IMR-90 (cell line): ENCODE measurements at regions of chr5 and their contacts with region 1.

Region 1: GRCh38 chr5:113612060-113612496 is 98.6 kb downstream of the YTHDC2 start:
- DNase-seq: peak; percentile 51
- ATAC-seq: peak; percentile 61
- H3K4me3 ChIP-seq: no peak overlapping the region
- H3K27ac ChIP-seq: no peak overlapping the region
- H3K4me1 ChIP-seq: peaks cover 9% of the 10 kb centered on the region
- H3K27me3 ChIP-seq: no peaks in the 10 kb centered on the region
- CTCF ChIP-seq: peak; percentile 67
- POLR2A ChIP-seq: no peak
- RAD21 ChIP-seq: peak; percentile 69

Region 2: GRCh38 chr5:113678924-113679575 is 67.0 kb after region 1 on chr5:
- CTCF ChIA-PET with region 1: interaction called, 3 read pairs
- POLR2A ChIA-PET with region 1: no interaction called
- dilution Hi-C with region 1: no loop called
- in situ Hi-C with region 1: no loop called
- intact Hi-C with region 1: loop called (anchors 1 kb)
- DNase-seq: peak; percentile 36
- ATAC-seq: peak; percentile 84
- H3K4me3 ChIP-seq: no peak overlapping the region
- H3K27ac ChIP-seq: no peak overlapping the region
- H3K4me1 ChIP-seq: no peaks in the 10 kb centered on the region
- H3K27me3 ChIP-seq: no peaks in the 10 kb centered on the region; the same call in 1 of the 2 replicates
- CTCF ChIP-seq: peak; percentile 84
- POLR2A ChIP-seq: no peak
- RAD21 ChIP-seq: peak; percentile 85

Region 3: DNA sequence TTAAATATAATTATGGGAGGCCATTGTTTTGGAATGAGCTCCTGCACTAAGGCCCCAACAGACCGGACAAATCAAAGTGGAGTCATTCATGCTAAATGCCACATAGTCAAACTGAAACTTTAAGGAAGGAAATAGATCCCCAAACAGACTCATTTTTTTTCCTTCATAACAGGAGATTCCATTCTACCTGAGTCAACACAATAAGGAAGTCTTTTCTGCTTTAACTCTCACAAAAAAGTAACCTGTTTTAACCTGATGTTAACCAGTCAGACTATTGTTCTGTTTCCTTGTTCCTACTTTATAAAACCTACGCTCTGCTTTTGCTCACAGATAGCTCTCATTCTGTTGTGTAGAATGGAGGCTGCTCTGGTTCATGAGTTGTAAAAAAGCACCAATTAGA is 136.3 kb after region 1 on chr5:
- CTCF ChIA-PET with region 1: no interaction called
- POLR2A ChIA-PET with region 1: no interaction called
- dilution Hi-C with region 1: no loop called
- in situ Hi-C with region 1: no loop called
- intact Hi-C with region 1: no loop called
- DNase-seq: no peak
- ATAC-seq: no peak
- H3K4me3 ChIP-seq: no peak overlapping the region
- H3K27ac ChIP-seq: no peak overlapping the region
- H3K4me1 ChIP-seq: no peaks in the 10 kb centered on the region
- H3K27me3 ChIP-seq: no peaks in the 10 kb centered on the region
- CTCF ChIP-seq: no peak
- POLR2A ChIP-seq: no peak
- RAD21 ChIP-seq: no peak

Region 4: GRCh38 chr5:114089259-114089658 is 477.2 kb after region 1 on chr5:
- CTCF ChIA-PET with region 1: no interaction called
- POLR2A ChIA-PET with region 1: no interaction called
- dilution Hi-C with region 1: no loop called
- in situ Hi-C with region 1: no loop called
- intact Hi-C with region 1: loop called (anchors 10 kb)
- DNase-seq: no peak
- ATAC-seq: no peak
- H3K4me3 ChIP-seq: no peak overlapping the region
- H3K27ac ChIP-seq: no peak overlapping the region
- H3K4me1 ChIP-seq: no peaks in the 10 kb centered on the region
- H3K27me3 ChIP-seq: no peaks in the 10 kb centered on the region
- CTCF ChIP-seq: no peak
- POLR2A ChIP-seq: no peak
- RAD21 ChIP-seq: no peak

Region 5: GRCh38 chr5:115262321-115263077 is 1650.4 kb after region 1 on chr5 and contains the start of gene PGGT1B:
- CTCF ChIA-PET with region 1: no interaction called
- POLR2A ChIA-PET with region 1: no interaction called
- dilution Hi-C with region 1: no loop called
- in situ Hi-C with region 1: no loop called
- intact Hi-C with region 1: loop called (anchors 10 kb)
- DNase-seq: peak; percentile 55
- ATAC-seq: peak; percentile 93
- H3K4me3 ChIP-seq: peak within 1 kb of the TSS; percentile 79
- H3K27ac ChIP-seq: peak within 1 kb of the TSS; percentile 91
- H3K4me1 ChIP-seq: peaks cover 7% of the 10 kb centered on the region; the same call in 1 of the 2 replicates
- H3K27me3 ChIP-seq: no peaks in the 10 kb centered on the region
- CTCF ChIP-seq: no peak
- POLR2A ChIP-seq: peak; percentile 78
- RAD21 ChIP-seq: no peak
- total RNA-seq, gene PGGT1B: 17.2 and 19.2 TPM in 2 replicates